CD4-positive, alpha-beta memory T cell (primary cell): ENCODE measurements at regions of chr17 and their contacts with region 1.

Region 1: DNA sequence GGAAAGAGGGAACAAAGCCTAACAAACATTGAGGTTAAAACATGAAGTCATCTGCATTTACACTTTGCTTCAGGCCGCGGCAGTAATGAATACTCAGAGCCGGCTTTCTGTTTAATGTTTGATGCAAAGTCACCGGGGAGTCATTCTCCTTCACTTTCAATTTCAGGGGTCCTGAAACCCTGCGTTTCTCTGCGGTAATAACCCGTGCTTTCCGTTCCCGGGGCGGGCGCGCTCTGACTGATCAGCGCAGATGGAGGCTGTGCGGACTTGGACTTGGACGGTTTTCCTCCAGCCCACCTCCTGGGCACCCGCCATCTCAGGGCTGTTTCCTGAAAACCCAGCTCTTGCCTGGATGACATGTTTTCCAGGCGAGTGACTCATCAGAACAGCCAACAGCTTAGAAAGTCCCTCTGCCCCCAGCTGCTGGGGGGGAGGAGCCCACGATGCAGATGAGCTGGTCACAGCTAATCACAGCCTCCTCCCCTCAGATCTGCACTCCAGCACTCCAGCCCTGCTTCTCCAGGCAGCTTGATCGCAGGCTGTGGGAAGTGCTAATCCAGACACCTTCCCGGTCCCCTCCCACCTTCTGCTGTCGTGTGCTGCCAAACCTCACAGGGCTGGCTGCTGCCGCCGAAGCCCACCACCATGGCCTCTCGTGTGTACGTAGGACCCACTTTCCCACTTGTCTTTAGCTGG is 158.6 kb upstream of the CHMP6 start:
- DNase-seq: peak; percentile 64 to 87 (median 70)
- H3K4me3 ChIP-seq: peak overlapping the region; percentile 55 to 57
- H3K4me3 Mint-ChIP-seq: peak overlapping the region; percentile 74 to 89 (median 86)
- H3K27ac ChIP-seq: peak overlapping the region; percentile 62
- H3K27ac Mint-ChIP-seq: peak overlapping the region; percentile 90 to 97 (median 93)
- H3K4me1 ChIP-seq: peaks cover 26% of the 10 kb centered on the region
- H3K4me1 Mint-ChIP-seq: peaks cover 21 to 33% (median 25%) of the 10 kb centered on the region in 4 donors
- H3K27me3 ChIP-seq: no peaks in the 10 kb centered on the region
- H3K27me3 Mint-ChIP-seq: no peaks in the 10 kb centered on the region

Region 2: DNA sequence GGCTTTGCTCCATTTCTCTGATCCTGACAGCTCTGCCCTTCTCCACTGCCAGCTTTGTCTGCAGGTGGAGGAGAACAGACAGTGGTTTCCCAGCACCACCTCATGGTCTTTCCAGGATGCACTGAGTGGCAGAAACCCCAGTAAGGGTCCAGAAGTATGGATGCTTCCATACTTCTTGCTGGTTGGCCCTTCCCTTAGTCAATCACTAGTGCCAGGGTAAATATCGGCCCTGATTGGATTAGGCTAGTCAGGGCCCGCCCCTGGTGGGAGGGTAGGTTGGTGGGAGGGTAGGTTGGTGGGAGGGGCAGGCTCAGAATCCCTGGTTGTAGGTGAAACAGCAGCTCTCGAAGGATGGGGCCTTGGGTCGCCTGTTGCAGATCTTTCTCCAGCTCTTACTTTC is 562.2 kb before region 1 on chr17:
- CTCF ChIA-PET with region 1: no interaction called
- POLR2A ChIA-PET with region 1: no interaction called
- intact Hi-C with region 1: no loop called
- DNase-seq: peak in 4 of 5 donors; percentile 21 to 36 (median 34)
- H3K4me3 ChIP-seq: no peak overlapping the region
- H3K4me3 Mint-ChIP-seq: peak overlapping the region in 3 of 8 donors; percentile 43 to 62 (median 53)
- H3K27ac ChIP-seq: peak overlapping the region; percentile 36
- H3K27ac Mint-ChIP-seq: peak overlapping the region in 6 of 7 donors; percentile 85 to 93 (median 89)
- H3K4me1 ChIP-seq: peaks cover 80% of the 10 kb centered on the region
- H3K4me1 Mint-ChIP-seq: peaks cover 27 to 38% (median 36%) of the 10 kb centered on the region in 4 donors
- H3K27me3 ChIP-seq: no peaks in the 10 kb centered on the region
- H3K27me3 Mint-ChIP-seq: no peaks in the 10 kb centered on the region

Region 3: GRCh38 chr17:80297996-80298560 is 535.0 kb before region 1 on chr17:
- CTCF ChIA-PET with region 1: no interaction called
- POLR2A ChIA-PET with region 1: no interaction called
- intact Hi-C with region 1: no loop called
- DNase-seq: no peak
- H3K4me3 ChIP-seq: no peak overlapping the region
- H3K4me3 Mint-ChIP-seq: no peak overlapping the region
- H3K27ac ChIP-seq: no peak overlapping the region
- H3K27ac Mint-ChIP-seq: peak overlapping the region in 1 of 7 donors; percentile 47
- H3K4me1 ChIP-seq: no peaks in the 10 kb centered on the region
- H3K4me1 Mint-ChIP-seq: peaks cover 3 to 10% (median 7%) of the 10 kb centered on the region in 4 donors
- H3K27me3 ChIP-seq: no peaks in the 10 kb centered on the region
- H3K27me3 Mint-ChIP-seq: no peaks in the 10 kb centered on the region

Region 4: DNA sequence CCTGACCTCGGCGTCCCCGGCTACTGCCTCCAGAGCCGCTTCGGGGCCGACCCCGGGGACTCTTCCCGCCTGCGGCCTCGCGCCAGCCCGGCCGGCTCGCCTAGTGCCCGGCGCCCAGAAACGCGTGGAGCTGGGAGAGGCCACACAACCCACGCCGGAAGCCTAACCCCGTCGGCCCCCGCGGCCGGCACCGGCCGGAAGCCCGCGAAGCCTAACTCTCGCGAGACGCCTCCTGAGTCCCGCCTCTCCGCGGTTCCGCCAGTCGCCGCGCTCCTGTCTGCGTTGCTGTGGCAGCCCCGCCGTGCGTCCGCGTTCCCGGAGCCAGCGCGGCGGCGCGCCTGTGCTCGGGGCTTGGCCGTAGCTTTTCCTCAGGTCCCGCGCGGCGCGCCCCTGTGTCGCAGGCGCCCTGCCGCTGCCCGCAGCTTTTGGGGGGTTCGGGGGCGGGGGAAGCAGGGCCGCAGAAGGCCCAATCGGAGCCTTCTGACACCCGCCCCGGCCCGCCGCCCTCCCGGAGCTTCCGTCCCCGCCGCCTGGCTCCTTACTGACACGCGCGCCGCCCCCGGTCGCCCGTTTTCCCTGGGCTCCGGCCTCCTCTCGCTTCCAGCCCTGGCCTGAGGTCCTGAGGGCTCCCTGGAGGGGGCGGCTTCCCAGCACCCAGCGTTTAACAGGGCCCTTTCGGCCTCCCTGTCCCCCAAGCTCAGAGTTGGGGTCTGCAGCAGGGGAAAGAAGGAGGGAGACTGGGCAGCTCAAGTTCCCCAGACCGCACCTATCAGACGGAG is 378.3 kb before region 1 on chr17:
- CTCF ChIA-PET with region 1: no interaction called
- POLR2A ChIA-PET with region 1: interaction called, 10 read pairs
- intact Hi-C with region 1: no loop called
- DNase-seq: peak; percentile 92 to 96 (median 95)
- H3K4me3 ChIP-seq: peak overlapping the region; percentile 42 to 66
- H3K4me3 Mint-ChIP-seq: peak overlapping the region; percentile 89 to 93 (median 92)
- H3K27ac ChIP-seq: peak overlapping the region; percentile 93
- H3K27ac Mint-ChIP-seq: peak overlapping the region; percentile 92 to 98 (median 96)
- H3K4me1 ChIP-seq: peaks cover 18% of the 10 kb centered on the region
- H3K4me1 Mint-ChIP-seq: peaks cover 9 to 25% (median 12%) of the 10 kb centered on the region in 4 donors
- H3K27me3 ChIP-seq: no peaks in the 10 kb centered on the region
- H3K27me3 Mint-ChIP-seq: peaks cover 14 to 17% of the 10 kb centered on the region in 2 donors

Region 5: GRCh38 chr17:80761110-80761871 is 71.7 kb before region 1 on chr17:
- CTCF ChIA-PET with region 1: no interaction called
- POLR2A ChIA-PET with region 1: interaction called, 8 read pairs
- intact Hi-C with region 1: loop called (anchors 2 kb)
- DNase-seq: peak; percentile 45 to 87 (median 53)
- H3K4me3 ChIP-seq: peak overlapping the region in 1 of 2 donors; percentile 27
- H3K4me3 Mint-ChIP-seq: peak overlapping the region; percentile 73 to 87 (median 80)
- H3K27ac ChIP-seq: peak overlapping the region; percentile 49
- H3K27ac Mint-ChIP-seq: peak overlapping the region; percentile 89 to 96 (median 94)
- H3K4me1 ChIP-seq: peaks cover 72% of the 10 kb centered on the region
- H3K4me1 Mint-ChIP-seq: peaks cover 59 to 86% (median 73%) of the 10 kb centered on the region in 4 donors
- H3K27me3 ChIP-seq: no peaks in the 10 kb centered on the region
- H3K27me3 Mint-ChIP-seq: no peaks in the 10 kb centered on the region

Region 6: GRCh38 chr17:80780381-80781198 is 52.4 kb before region 1 on chr17:
- CTCF ChIA-PET with region 1: interaction called, 4 read pairs
- POLR2A ChIA-PET with region 1: interaction called, 15 read pairs
- intact Hi-C with region 1: loop called (anchors 2 kb)
- DNase-seq: no peak
- H3K4me3 ChIP-seq: peak overlapping the region in 1 of 2 donors; percentile 23
- H3K4me3 Mint-ChIP-seq: peak overlapping the region; percentile 37 to 91 (median 66)
- H3K27ac ChIP-seq: peak overlapping the region; percentile 42
- H3K27ac Mint-ChIP-seq: peak overlapping the region; percentile 70 to 93 (median 78)
- H3K4me1 ChIP-seq: peaks cover 58% of the 10 kb centered on the region
- H3K4me1 Mint-ChIP-seq: peaks cover 37 to 81% (median 67%) of the 10 kb centered on the region in 4 donors
- H3K27me3 ChIP-seq: no peaks in the 10 kb centered on the region
- H3K27me3 Mint-ChIP-seq: no peaks in the 10 kb centered on the region

Region 7: GRCh38 chr17:80811181-80812105 is 21.6 kb before region 1 on chr17:
- CTCF ChIA-PET with region 1: interaction called, 3 read pairs
- POLR2A ChIA-PET with region 1: interaction called, 11 read pairs
- intact Hi-C with region 1: no loop called
- DNase-seq: peak in 4 of 5 donors; percentile 15 to 58 (median 36)
- H3K4me3 ChIP-seq: no peak overlapping the region
- H3K4me3 Mint-ChIP-seq: peak overlapping the region in 6 of 8 donors; percentile 23 to 82 (median 76)
- H3K27ac ChIP-seq: peak overlapping the region; percentile 52
- H3K27ac Mint-ChIP-seq: peak overlapping the region; percentile 86 to 97 (median 95)
- H3K4me1 ChIP-seq: peaks cover 22% of the 10 kb centered on the region
- H3K4me1 Mint-ChIP-seq: peaks cover 22 to 54% (median 38%) of the 10 kb centered on the region in 4 donors
- H3K27me3 ChIP-seq: no peaks in the 10 kb centered on the region
- H3K27me3 Mint-ChIP-seq: no peaks in the 10 kb centered on the region

Region 8: GRCh38 chr17:80847496-80848230 is 14.6 kb after region 1 on chr17:
- CTCF ChIA-PET with region 1: interaction called, 9 read pairs
- POLR2A ChIA-PET with region 1: interaction called, 13 read pairs
- intact Hi-C with region 1: no loop called
- DNase-seq: peak; percentile 37 to 55 (median 54)
- H3K4me3 ChIP-seq: peak overlapping the region in 1 of 2 donors; percentile 22
- H3K4me3 Mint-ChIP-seq: peak overlapping the region; percentile 48 to 86 (median 76)
- H3K27ac ChIP-seq: peak overlapping the region; percentile 56
- H3K27ac Mint-ChIP-seq: peak overlapping the region; percentile 78 to 96 (median 92)
- H3K4me1 ChIP-seq: peaks cover 45% of the 10 kb centered on the region
- H3K4me1 Mint-ChIP-seq: peaks cover 30 to 56% (median 49%) of the 10 kb centered on the region in 4 donors
- H3K27me3 ChIP-seq: no peaks in the 10 kb centered on the region
- H3K27me3 Mint-ChIP-seq: no peaks in the 10 kb centered on the region